HepG2 (cell line): ENCODE measurements at regions of chr3 and their contacts with region 1.

Region 1: DNA sequence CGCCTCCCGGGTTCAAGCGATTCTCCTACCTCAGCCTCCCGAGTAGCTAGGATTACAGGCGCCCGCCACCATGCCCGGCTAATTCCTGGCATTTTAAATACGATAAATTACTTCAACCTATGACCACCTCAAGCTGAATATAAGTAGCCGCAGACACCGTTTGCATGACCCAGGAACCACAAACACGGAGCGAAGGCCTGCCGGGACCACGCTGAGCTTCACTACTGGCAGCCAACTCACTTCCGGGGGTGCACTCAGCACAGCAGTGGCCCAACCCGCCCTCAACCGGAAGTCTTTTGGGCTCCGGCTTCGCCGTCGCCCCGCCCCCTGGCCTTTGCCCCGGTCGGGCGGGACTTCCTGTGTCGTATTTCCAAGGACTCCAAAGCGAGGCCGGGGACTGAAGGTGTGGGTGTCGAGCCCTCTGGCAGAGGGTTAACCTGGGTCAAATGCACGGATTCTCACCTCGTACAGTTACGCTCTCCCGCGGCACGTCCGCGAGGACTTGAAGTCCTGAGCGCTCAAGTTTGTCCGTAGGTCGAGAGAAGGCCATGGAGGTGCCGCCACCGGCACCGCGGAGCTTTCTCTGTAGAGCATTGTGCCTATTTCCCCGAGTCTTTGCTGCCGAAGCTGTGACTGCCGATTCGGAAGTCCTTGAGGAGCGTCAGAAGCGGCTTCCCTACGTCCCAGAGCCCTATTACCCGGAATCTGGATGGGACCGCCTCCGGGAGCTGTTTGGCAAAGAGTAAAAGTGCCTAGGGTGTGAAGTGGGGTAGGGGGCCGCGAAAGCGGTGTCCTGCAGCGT is at the start of gene TIMMDC1:
- DNase-seq: peak; percentile 96
- ATAC-seq: peak; percentile 99
- H3K4me3 ChIP-seq: peak within 1 kb of the TSS; percentile 63 to 97 (median 96)
- H3K27ac ChIP-seq: peak within 1 kb of the TSS; percentile 97
- H3K4me1 ChIP-seq: peaks cover 31% of the 10 kb centered on the region
- H3K27me3 ChIP-seq: no peaks in the 10 kb centered on the region; a peak in 1 of 5 replicates
- CTCF ChIP-seq: no peak
- EP300 ChIP-seq: 0 out of 4 replicates have a peak, but pooled peaks of 1 of the 2 experiments have one; percentile 38
- POLR2A ChIP-seq: peak; percentile 94 to 98
- RAD21 ChIP-seq: peak; percentile 37
- total RNA-seq, gene TIMMDC1: 77.8 and 78.2 TPM in 2 replicates

Region 2: GRCh38 chr3:118466795-118467330 is 1031.5 kb before region 1 on chr3:
- CTCF ChIA-PET with region 1: no interaction called
- POLR2A ChIA-PET with region 1: no interaction called
- in situ Hi-C with region 1: no loop called
- intact Hi-C with region 1: no loop called
- DNase-seq: no peak
- ATAC-seq: no peak
- H3K4me3 ChIP-seq: no peak overlapping the region
- H3K27ac ChIP-seq: no peak overlapping the region
- H3K4me1 ChIP-seq: no peaks in the 10 kb centered on the region
- H3K27me3 ChIP-seq: no peaks in the 10 kb centered on the region
- CTCF ChIP-seq: no peak
- EP300 ChIP-seq: no peak
- POLR2A ChIP-seq: no peak
- RAD21 ChIP-seq: no peak

Region 3: GRCh38 chr3:119428538-119428937 is 69.8 kb before region 1 on chr3:
- CTCF ChIA-PET with region 1: no interaction called
- POLR2A ChIA-PET with region 1: no interaction called
- in situ Hi-C with region 1: no loop called
- intact Hi-C with region 1: no loop called
- DNase-seq: peak; percentile 20
- ATAC-seq: peak; percentile 39; the same call in 2 of the 3 replicates
- H3K4me3 ChIP-seq: no peak overlapping the region
- H3K27ac ChIP-seq: no peak overlapping the region
- H3K4me1 ChIP-seq: no peaks in the 10 kb centered on the region
- H3K27me3 ChIP-seq: no peaks in the 10 kb centered on the region
- CTCF ChIP-seq: no peak
- EP300 ChIP-seq: no peak
- POLR2A ChIP-seq: no peak
- RAD21 ChIP-seq: no peak

Region 4: GRCh38 chr3:119463171-119464169 is 34.9 kb before region 1 on chr3 and contains the start of gene TMEM39A:
- CTCF ChIA-PET with region 1: no interaction called
- POLR2A ChIA-PET with region 1: interaction called, 80 read pairs
- in situ Hi-C with region 1: no loop called
- intact Hi-C with region 1: loop called (anchors 1 kb)
- DNase-seq: peak; percentile 97
- ATAC-seq: peak; percentile 98
- H3K4me3 ChIP-seq: peak within 1 kb of the TSS; percentile 89 to 97 (median 93)
- H3K27ac ChIP-seq: peak within 1 kb of the TSS; percentile 90
- H3K4me1 ChIP-seq: peaks cover 42% of the 10 kb centered on the region
- H3K27me3 ChIP-seq: no peaks in the 10 kb centered on the region; a peak in 1 of 5 replicates
- CTCF ChIP-seq: no peak
- EP300 ChIP-seq: no peak
- POLR2A ChIP-seq: peak; percentile 98 to 99
- RAD21 ChIP-seq: no peak; the same call in 1 of the 2 replicates
- total RNA-seq, gene TMEM39A: 32.9 and 55.8 TPM in 2 replicates

Region 5: DNA sequence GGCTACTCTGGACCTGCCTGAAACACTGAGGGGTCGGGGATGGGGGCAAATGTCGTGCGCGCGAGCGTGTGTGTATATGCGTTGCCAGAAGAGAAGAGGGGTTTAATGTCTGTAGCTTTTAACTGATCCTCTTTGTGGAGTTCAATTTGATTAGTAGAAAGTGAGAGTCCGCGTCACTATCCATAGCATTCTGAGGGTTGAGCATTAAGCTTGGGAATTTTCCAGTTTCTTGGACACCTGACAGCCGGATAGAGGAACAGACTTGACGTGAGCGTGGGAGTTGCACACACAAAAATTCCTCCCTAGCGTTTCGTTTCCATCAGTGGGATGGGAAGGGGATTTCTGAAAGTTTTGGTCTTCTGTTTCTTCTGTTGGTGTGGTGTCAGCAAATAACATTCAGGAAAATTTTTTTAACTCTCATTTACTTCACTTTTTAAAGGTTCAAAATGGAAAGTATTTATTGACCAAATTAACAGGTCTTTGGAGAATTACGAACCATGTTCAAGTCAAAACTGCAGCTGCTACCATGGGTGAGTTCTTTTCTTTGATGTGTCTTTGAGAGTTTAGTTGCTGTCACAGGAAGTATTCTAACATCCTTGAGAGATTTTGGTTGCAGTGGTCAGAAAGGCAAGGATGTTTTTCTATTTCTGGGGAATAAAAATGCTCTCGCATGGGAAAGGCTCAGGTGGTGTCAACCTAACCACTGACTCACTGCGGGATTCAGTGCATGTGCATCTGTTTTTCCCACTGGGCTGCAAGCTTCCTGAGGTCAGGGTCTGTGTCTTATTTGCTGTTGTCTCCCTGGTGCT is 28.8 kb before region 1 on chr3:
- CTCF ChIA-PET with region 1: no interaction called
- POLR2A ChIA-PET with region 1: interaction called, 80 read pairs
- in situ Hi-C with region 1: no loop called
- intact Hi-C with region 1: loop called (anchors 1 kb)
- DNase-seq: no peak
- ATAC-seq: peak; percentile 80
- H3K4me3 ChIP-seq: peak overlapping the region; percentile 79 to 93 (median 92)
- H3K27ac ChIP-seq: peak overlapping the region; percentile 75
- H3K4me1 ChIP-seq: peaks cover 28% of the 10 kb centered on the region
- H3K27me3 ChIP-seq: no peaks in the 10 kb centered on the region; a peak in 1 of 5 replicates
- CTCF ChIP-seq: no peak
- EP300 ChIP-seq: no peak
- POLR2A ChIP-seq: no peak
- RAD21 ChIP-seq: no peak

Region 6: DNA sequence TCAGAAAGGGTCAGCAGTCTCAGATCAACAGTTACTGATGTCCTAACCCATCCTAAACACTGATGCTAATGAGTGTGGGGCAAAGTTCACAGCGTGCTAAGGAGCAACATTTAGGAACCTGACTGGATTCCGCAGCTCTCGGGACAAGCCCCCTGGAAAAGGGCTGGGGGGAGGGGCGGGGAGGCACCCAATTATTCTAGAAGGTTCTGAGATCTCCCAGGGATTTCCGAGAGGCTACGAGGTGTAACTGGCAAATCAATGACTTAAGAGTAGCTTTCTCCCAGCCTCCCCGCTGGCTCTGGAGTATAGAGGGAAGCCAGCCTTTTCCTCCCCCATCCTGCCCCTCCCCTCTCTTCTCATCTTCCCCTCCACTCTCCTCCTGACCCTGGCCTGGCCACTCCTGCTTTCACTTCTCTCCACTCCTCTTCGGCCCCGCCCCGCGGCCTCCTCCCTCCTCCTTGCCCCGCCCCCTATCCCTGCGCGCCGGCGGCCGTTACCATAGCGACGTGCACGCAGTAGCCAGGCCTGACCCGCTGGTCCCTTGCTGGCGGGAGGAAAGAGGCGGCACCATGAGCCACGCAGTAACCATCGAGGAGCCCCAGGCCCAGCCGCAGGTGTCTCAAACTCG is 204.3 kb after region 1 on chr3 and contains the start of gene CFAP91:
- CTCF ChIA-PET with region 1: no interaction called
- POLR2A ChIA-PET with region 1: no interaction called
- in situ Hi-C with region 1: no loop called
- intact Hi-C with region 1: no loop called
- DNase-seq: no peak
- ATAC-seq: no peak
- H3K4me3 ChIP-seq: no peak within 1 kb of the TSS
- H3K27ac ChIP-seq: no peak within 1 kb of the TSS
- H3K4me1 ChIP-seq: peaks cover 11% of the 10 kb centered on the region
- H3K27me3 ChIP-seq: no peaks in the 10 kb centered on the region; a peak in 1 of 5 replicates
- CTCF ChIP-seq: no peak
- EP300 ChIP-seq: no peak
- POLR2A ChIP-seq: no peak
- RAD21 ChIP-seq: no peak
- total RNA-seq, gene CFAP91: not detected in 2 replicates

Region 7: DNA sequence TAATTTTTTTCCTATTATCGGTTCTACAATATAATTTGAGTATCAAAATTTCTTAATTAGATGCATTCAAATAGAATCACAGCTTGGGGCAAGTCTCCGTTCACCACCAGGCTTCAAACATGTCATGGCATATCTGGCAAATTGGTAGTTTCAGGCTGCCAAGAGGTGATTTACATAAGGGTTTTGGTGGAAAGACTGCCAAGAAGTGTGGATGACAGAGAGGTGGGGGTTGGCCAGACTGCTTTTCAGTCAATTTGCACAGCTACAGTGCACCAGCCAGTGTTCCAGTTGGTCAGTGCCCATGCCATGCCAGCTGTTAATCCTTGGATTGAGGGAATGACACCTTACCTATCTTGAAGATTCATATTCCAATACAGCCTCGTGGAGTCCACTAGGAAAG is 604.3 kb after region 1 on chr3:
- CTCF ChIA-PET with region 1: no interaction called
- POLR2A ChIA-PET with region 1: no interaction called
- in situ Hi-C with region 1: no loop called
- intact Hi-C with region 1: no loop called
- DNase-seq: no peak
- ATAC-seq: no peak
- H3K4me3 ChIP-seq: no peak overlapping the region
- H3K27ac ChIP-seq: no peak overlapping the region
- H3K4me1 ChIP-seq: 0 out of 2 replicates have a peak, but pooled peaks cover 10% of the 10 kb centered on the region
- H3K27me3 ChIP-seq: no peaks in the 10 kb centered on the region
- CTCF ChIP-seq: no peak
- EP300 ChIP-seq: no peak
- POLR2A ChIP-seq: no peak
- RAD21 ChIP-seq: no peak